ENCODE measurements at regions of chr20 and their contacts with region 1.

Region 1: GRCh38 chr20:40962730-40963504 is 65.7 kb upstream of the TOP1 start:
- DNase-seq: peak; percentile 72
- H3K4me3 ChIP-seq: no peak overlapping the region
- H3K27ac ChIP-seq: no peak overlapping the region
- H3K4me1 ChIP-seq: peaks cover 0 to 4% (median 0%) of the 10 kb centered on the region in 4 donors
- H3K27me3 ChIP-seq: peaks cover 4% of the 10 kb centered on the region
- CTCF ChIP-seq: peak; percentile 81 to 93 (median 91)
- EP300 ChIP-seq: no peak
- POLR2A ChIP-seq: no peak

Region 2: DNA sequence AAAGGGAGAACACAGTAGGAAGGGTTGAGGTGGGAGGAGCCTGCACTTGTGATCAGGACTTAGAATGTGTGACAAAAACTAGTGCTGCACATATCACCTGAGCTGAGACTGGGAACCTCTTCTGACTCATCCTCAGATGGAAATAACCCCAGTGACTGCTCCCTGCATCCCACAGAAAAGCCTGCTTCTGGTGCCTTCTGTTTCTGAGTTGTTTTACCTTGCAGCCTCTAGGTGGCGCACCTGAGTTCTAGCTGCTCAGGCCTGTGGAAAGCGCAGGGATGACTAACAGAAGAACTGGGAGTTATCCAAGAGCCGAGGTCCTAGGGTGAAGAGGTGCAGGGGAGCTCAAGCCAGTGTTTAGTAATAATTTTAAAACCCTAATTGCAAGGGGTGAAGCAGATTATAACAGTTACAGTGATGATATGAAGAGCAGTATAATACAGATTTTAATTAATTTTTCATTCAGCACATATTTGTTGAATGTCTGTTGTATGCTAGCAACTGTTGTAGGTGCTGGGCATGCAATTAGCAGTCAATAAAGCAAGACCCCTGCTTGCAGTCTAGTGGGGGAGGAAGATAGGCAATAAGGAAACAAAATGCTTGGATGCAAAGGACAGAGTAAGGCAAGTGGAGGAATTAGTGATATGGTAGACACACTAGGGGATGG is 1698.3 kb before region 1 on chr20:
- in situ Hi-C with region 1: no loop called
- intact Hi-C with region 1: loop called (anchors 10 kb)
- DNase-seq: peak; percentile 42
- H3K4me3 ChIP-seq: no peak overlapping the region
- H3K27ac ChIP-seq: no peak overlapping the region
- H3K4me1 ChIP-seq: no peaks in the 10 kb centered on the region
- H3K27me3 ChIP-seq: no peaks in the 10 kb centered on the region
- CTCF ChIP-seq: peak; percentile 63 to 81 (median 75)
- EP300 ChIP-seq: no peak
- POLR2A ChIP-seq: no peak

Region 3: GRCh38 chr20:39885975-39886649 is 1076.8 kb before region 1 on chr20:
- in situ Hi-C with region 1: loop called in 2 of 4 experiments (anchors 25 kb)
- intact Hi-C with region 1: no loop called
- DNase-seq: peak; percentile 47
- H3K4me3 ChIP-seq: no peak overlapping the region
- H3K27ac ChIP-seq: no peak overlapping the region
- H3K4me1 ChIP-seq: no peaks in the 10 kb centered on the region
- H3K27me3 ChIP-seq: no peaks in the 10 kb centered on the region
- CTCF ChIP-seq: peak; percentile 34 to 46 (median 35)
- EP300 ChIP-seq: no peak
- POLR2A ChIP-seq: no peak

Region 4: GRCh38 chr20:40741507-40742106 is 221.3 kb before region 1 on chr20:
- in situ Hi-C with region 1: loop called in 1 of 4 experiments (anchors 25 kb)
- intact Hi-C with region 1: no loop called
- DNase-seq: peak; percentile 51
- H3K4me3 ChIP-seq: no peak overlapping the region
- H3K27ac ChIP-seq: no peak overlapping the region
- H3K4me1 ChIP-seq: no peaks in the 10 kb centered on the region
- H3K27me3 ChIP-seq: peaks cover 10% of the 10 kb centered on the region
- CTCF ChIP-seq: peak; percentile 42 to 62 (median 47)
- EP300 ChIP-seq: no peak
- POLR2A ChIP-seq: no peak

Region 5: DNA sequence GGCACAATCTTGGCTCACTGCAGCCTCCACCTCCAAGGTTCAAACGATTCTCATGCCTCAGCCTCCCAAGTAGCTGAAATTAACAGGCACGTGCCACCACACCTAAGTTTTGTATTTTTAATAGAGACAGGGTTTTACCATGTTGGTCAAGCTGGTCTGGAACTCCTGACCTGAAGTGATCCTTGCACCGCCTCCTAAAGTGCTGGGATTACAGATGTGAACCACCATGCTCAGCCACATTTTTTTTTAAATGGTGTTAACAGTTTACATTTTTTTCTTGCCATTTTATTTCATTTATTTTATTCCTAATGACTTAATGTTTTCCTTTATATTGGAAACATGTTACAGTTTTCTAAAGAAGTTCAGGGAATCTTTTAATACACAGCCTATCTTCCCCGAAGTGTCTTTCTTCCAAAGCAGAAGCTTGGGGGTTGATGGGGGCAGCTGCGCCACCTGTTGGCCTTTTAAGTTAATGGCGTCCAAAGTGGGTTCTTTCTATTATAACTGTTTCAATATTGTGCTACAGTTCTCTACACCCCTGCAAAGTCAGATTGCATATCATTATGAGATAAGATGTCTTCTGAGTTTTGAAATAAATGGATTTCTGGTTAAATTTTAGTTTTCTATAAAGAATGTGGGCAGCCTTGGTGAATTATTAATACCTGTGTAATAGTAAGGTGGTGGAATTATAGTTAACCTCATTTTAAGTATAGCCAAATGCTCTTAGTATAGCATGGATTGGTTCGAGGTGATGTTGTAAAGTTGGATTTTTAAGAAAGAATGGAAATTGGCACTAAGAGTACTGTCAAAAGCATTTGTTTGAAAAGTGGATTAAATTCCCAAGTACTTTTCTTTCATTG is 132.4 kb after region 1 on chr20:
- in situ Hi-C with region 1: loop called in 1 of 4 experiments (anchors 5 kb)
- intact Hi-C with region 1: no loop called
- DNase-seq: peak; percentile 69
- H3K4me3 ChIP-seq: no peak overlapping the region
- H3K27ac ChIP-seq: no peak overlapping the region
- H3K4me1 ChIP-seq: peaks cover 0 to 9% (median 0%) of the 10 kb centered on the region in 4 donors
- H3K27me3 ChIP-seq: no peaks in the 10 kb centered on the region
- CTCF ChIP-seq: peak; percentile 77 to 90 (median 86)
- EP300 ChIP-seq: no peak
- POLR2A ChIP-seq: no peak